Heart left ventricle (tissue), 16 donors: ENCODE measurements at regions of chr20 and their contacts with region 1.

Region 1: GRCh38 chr20:60037120-60037499 is 78.9 kb downstream of the CDH26 start:
- DNase-seq: no peak
- ATAC-seq: no peak
- H3K4me3 ChIP-seq: no peak overlapping the region
- H3K27ac ChIP-seq: peak overlapping the region in 1 of 12 donors; percentile 43
- H3K4me1 ChIP-seq: peaks cover 0 to 25% (median 14%) of the 10 kb centered on the region in 12 donors
- H3K27me3 ChIP-seq: no peaks in the 10 kb centered on the region
- CTCF ChIP-seq: no peak
- POLR2A ChIP-seq: no peak

Region 2: GRCh38 chr20:59782986-59783640 is 254.0 kb before region 1 on chr20:
- intact Hi-C with region 1: no loop called
- DNase-seq: peak in 3 of 5 donors; percentile 39 to 61 (median 51)
- ATAC-seq: peak; percentile 24 to 66 (median 53)
- H3K4me3 ChIP-seq: no peak overlapping the region
- H3K27ac ChIP-seq: no peak overlapping the region
- H3K4me1 ChIP-seq: no peaks in the 10 kb centered on the region
- H3K27me3 ChIP-seq: peaks cover 0 to 4% (median 0%) of the 10 kb centered on the region in 9 donors
- CTCF ChIP-seq: peak; percentile 73 to 89 (median 83)
- POLR2A ChIP-seq: no peak

Region 3: DNA sequence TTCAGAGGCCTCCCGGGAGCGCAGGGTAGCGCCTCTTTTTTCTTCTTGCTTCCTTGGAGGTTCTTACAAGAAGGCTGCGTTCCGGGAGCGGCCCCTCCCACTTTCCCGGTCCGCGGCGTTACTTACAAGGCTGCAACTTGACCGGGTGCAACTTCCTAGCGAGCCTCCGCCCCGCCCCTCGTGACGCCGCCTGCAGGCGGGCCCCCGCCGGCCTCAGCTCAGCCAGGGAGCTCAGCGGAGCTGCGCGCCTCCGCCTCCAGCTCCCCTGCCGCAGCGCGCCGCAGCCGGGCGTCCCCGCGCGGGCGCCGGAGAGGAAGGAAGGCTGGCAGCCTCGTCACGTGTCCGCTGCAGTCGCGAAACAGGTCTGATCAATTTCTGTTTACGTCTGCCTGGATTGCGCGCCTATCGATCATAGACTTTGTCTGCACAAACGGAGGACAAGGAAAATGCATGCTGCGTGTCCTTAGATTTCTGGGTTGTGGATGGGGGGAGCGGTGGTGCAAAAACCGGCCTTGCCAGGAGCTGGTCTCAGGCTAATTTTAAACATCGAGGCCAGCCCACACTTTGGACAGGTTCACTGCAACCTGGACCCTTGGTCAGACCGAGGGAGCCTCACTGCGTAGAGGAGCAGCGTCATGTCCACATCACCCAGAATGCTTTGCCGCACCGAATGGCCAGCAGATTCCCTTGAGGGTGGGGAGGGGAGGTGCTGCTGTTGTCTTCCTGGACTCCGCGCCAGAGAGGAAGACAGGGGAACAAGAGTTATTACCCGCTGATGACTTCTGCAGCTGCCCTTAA is 96.7 kb before region 1 on chr20 and contains the starts of genes FAM217B and PPP1R3D:
- intact Hi-C with region 1: loop called in 4 of 10 experiments (anchors 10 kb)
- DNase-seq: peak; percentile 98 to 99 (median 98)
- ATAC-seq: peak; percentile 89 to 96 (median 94)
- H3K4me3 ChIP-seq: peak within 1 kb of the TSS; percentile 49 to 90 (median 76)
- H3K27ac ChIP-seq: peak within 1 kb of the TSS; percentile 90 to 99 (median 96)
- H3K4me1 ChIP-seq: peaks cover 3 to 68% (median 51%) of the 10 kb centered on the region in 12 donors
- H3K27me3 ChIP-seq: no peaks in the 10 kb centered on the region
- CTCF ChIP-seq: peak in 6 of 12 donors; percentile 15 to 46 (median 30)
- POLR2A ChIP-seq: peak in 1 of 2 donors; percentile 88
- total RNA-seq, gene FAM217B: 16.7 to 38.0 (median 26.4) TPM
- total RNA-seq, gene PPP1R3D: 9.1 to 14.7 (median 12.7) TPM

Region 4: DNA sequence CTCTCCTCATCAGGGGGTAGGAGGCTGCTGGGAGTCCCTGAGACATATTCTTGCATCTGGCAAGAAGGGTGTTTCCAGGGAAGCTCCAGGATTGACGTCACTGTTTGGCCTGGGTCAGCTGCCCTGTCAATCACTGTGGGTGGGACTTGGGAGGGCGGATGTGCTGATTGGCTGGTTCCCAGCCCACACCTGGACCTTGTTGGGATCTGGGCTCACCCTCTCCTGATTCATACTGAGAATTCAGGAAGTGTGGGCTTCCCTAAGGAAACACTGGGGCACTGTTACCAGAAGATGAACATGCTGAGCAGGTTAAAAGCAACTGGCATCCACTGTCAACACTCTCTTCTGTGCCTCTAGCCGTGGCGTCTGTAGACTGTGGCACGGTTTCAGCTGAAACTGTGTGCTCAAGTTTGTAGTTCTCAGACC is 42.4 kb before region 1 on chr20:
- intact Hi-C with region 1: loop called in 1 of 10 experiments (anchors 5 kb)
- DNase-seq: peak in 4 of 5 donors; percentile 27 to 66 (median 43)
- ATAC-seq: peak; percentile 22 to 84 (median 72)
- H3K4me3 ChIP-seq: peak overlapping the region in 2 of 12 donors; percentile 28 to 34
- H3K27ac ChIP-seq: no peak overlapping the region
- H3K4me1 ChIP-seq: peaks cover 0 to 20% (median 7%) of the 10 kb centered on the region in 12 donors
- H3K27me3 ChIP-seq: no peaks in the 10 kb centered on the region
- CTCF ChIP-seq: no peak
- POLR2A ChIP-seq: no peak

Region 5: GRCh38 chr20:60108397-60108796 is 71.3 kb after region 1 on chr20:
- intact Hi-C with region 1: no loop called
- DNase-seq: no peak
- ATAC-seq: no peak
- H3K4me3 ChIP-seq: no peak overlapping the region
- H3K27ac ChIP-seq: no peak overlapping the region
- H3K4me1 ChIP-seq: peaks cover 0 to 7% (median 0%) of the 10 kb centered on the region in 12 donors
- H3K27me3 ChIP-seq: no peaks in the 10 kb centered on the region
- CTCF ChIP-seq: no peak
- POLR2A ChIP-seq: no peak